ENCODE measurements at regions of chrX and their contacts with region 1.

Region 1: DNA sequence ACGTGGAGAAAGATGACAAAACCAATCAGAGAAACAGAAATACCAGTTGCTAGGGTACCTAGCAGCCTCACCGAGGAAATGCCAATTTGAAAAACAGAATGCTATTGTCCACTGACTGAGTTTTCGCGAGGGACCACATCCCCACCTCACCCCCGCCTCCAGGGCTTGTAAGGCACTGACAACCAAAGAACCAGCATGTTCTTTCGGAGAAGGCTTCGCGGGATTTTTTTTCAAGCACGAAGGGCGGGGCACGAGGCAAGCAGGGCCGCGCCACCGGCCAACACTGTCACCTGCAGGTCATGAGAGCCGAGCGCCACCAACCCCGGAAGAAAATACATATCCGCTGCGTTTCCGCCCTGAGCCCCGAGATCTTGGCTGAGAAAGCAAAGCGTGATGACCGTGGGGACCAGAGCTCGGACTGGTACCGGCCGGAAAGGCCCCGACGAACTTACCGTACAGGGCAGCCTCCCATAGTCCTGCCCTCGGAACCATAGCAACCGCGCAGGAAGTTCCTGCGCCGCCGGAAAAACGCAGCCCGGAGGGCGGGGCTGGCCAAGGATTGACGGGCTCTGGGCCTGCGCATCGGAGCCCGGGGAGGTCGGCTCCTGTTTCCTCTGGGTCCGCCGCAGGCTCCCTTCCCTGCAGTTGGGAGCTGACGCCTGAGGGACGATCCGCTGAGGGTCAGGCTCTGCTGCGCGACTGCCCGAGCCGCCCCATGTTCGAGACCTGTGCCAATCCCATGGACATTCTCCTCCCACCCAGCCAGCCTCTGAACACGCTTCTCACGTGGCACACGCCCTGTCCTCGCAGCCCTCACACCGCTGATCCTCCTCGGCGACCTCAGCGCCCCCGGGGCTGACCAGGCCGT is 59.2 kb upstream of the PAGE5 start:
- DNase-seq: peak; percentile 84 to 93 (median 90)
- ATAC-seq: peak; percentile 91
- H3K4me3 ChIP-seq: peak overlapping the region; percentile 77
- H3K4me3 Mint-ChIP-seq: peak overlapping the region; percentile 90
- H3K27ac ChIP-seq: peak overlapping the region; percentile 79 to 94
- H3K27ac Mint-ChIP-seq: peak overlapping the region; percentile 88
- H3K4me1 ChIP-seq: peaks cover 8% of the 10 kb centered on the region
- H3K4me1 Mint-ChIP-seq: peaks cover 17% of the 10 kb centered on the region
- H3K27me3 ChIP-seq: no peaks in the 10 kb centered on the region
- H3K27me3 Mint-ChIP-seq: no peaks in the 10 kb centered on the region
- CTCF ChIP-seq: peak; percentile 64

Region 2: GRCh38 chrX:54044126-54044876 is 1116.6 kb before region 1 on chrX and contains the start of gene PHF8:
- CTCF ChIA-PET with region 1: interaction called, 3 read pairs
- POLR2A ChIA-PET with region 1: no interaction called
- intact Hi-C with region 1: loop called in 1 of 2 experiments (anchors 2 kb)
- DNase-seq: peak; percentile 89 to 97 (median 94)
- ATAC-seq: peak; percentile 84
- H3K4me3 ChIP-seq: peak within 1 kb of the TSS; percentile 75
- H3K4me3 Mint-ChIP-seq: peak within 1 kb of the TSS; percentile 96
- H3K27ac ChIP-seq: peak within 1 kb of the TSS; percentile 89 to 90
- H3K27ac Mint-ChIP-seq: peak within 1 kb of the TSS; percentile 99
- H3K4me1 ChIP-seq: peaks cover 13% of the 10 kb centered on the region
- H3K4me1 Mint-ChIP-seq: peaks cover 29% of the 10 kb centered on the region
- H3K27me3 ChIP-seq: no peaks in the 10 kb centered on the region
- H3K27me3 Mint-ChIP-seq: no peaks in the 10 kb centered on the region
- CTCF ChIP-seq: no peak
- total RNA-seq, gene PHF8: 46.1 to 49.9 TPM

Region 3: DNA sequence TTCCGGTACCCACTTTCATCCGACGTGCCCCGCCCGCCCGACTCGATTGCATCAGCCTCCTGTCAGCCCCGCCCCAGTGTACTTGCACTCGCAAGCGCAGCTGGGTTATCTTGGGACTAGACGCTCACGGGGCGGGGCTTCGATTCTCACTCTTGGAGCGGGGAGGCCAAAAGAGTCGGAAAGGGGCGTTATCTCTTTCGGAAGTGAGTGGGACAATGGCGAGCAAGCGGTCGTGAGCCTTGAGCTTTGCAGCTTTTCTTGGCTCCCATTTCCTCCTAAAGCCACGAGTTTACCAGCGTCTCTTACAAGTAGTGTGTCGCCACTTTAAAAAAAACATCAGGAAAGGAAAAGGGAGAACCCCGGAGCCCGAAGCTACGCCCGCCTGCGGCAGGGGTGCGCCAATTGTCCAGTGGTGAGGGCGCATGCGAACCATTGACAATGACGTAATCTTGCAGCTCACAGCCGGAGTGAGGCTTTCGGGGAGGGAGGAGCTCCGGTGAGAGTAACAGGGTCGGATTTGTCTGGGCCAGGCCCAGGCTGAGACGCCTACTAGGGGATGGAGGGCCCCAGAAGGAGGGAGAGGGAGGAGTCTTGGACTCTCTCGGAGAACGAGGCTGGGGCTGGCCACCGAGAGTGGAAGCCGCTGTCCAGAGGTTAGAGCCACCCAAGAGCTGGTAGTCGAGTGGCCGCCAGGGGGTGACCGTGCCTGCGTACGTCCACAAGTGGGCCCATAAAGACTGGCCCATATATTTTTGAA is 521.4 kb before region 1 on chrX:
- CTCF ChIA-PET with region 1: no interaction called
- POLR2A ChIA-PET with region 1: interaction called, 7 read pairs
- intact Hi-C with region 1: loop called in 1 of 2 experiments (anchors 5 kb)
- DNase-seq: peak; percentile 82 to 96 (median 90)
- ATAC-seq: peak; percentile 88
- H3K4me3 ChIP-seq: peak overlapping the region; percentile 60
- H3K4me3 Mint-ChIP-seq: peak overlapping the region; percentile 94
- H3K27ac ChIP-seq: peak overlapping the region; percentile 93 to 95
- H3K27ac Mint-ChIP-seq: peak overlapping the region; percentile 98
- H3K4me1 ChIP-seq: peaks cover 14% of the 10 kb centered on the region
- H3K4me1 Mint-ChIP-seq: peaks cover 14% of the 10 kb centered on the region
- H3K27me3 ChIP-seq: no peaks in the 10 kb centered on the region
- H3K27me3 Mint-ChIP-seq: no peaks in the 10 kb centered on the region
- CTCF ChIP-seq: peak; percentile 47

Region 4: GRCh38 chrX:54999717-55000598 is 161.0 kb before region 1 on chrX and contains the start of gene APEX2:
- CTCF ChIA-PET with region 1: interaction called, 3 read pairs
- POLR2A ChIA-PET with region 1: interaction called, 3 read pairs
- intact Hi-C with region 1: loop called in 1 of 2 experiments (anchors 5 kb)
- DNase-seq: peak; percentile 72 to 95 (median 84)
- ATAC-seq: peak; percentile 94
- H3K4me3 ChIP-seq: peak within 1 kb of the TSS; percentile 89
- H3K4me3 Mint-ChIP-seq: peak within 1 kb of the TSS; percentile 96
- H3K27ac ChIP-seq: peak within 1 kb of the TSS; percentile 84 to 97
- H3K27ac Mint-ChIP-seq: peak within 1 kb of the TSS; percentile 97
- H3K4me1 ChIP-seq: peaks cover 20% of the 10 kb centered on the region
- H3K4me1 Mint-ChIP-seq: peaks cover 36% of the 10 kb centered on the region
- H3K27me3 ChIP-seq: no peaks in the 10 kb centered on the region
- H3K27me3 Mint-ChIP-seq: no peaks in the 10 kb centered on the region
- CTCF ChIP-seq: no peak
- total RNA-seq, gene APEX2: 6.4 to 7.2 TPM

Region 5: DNA sequence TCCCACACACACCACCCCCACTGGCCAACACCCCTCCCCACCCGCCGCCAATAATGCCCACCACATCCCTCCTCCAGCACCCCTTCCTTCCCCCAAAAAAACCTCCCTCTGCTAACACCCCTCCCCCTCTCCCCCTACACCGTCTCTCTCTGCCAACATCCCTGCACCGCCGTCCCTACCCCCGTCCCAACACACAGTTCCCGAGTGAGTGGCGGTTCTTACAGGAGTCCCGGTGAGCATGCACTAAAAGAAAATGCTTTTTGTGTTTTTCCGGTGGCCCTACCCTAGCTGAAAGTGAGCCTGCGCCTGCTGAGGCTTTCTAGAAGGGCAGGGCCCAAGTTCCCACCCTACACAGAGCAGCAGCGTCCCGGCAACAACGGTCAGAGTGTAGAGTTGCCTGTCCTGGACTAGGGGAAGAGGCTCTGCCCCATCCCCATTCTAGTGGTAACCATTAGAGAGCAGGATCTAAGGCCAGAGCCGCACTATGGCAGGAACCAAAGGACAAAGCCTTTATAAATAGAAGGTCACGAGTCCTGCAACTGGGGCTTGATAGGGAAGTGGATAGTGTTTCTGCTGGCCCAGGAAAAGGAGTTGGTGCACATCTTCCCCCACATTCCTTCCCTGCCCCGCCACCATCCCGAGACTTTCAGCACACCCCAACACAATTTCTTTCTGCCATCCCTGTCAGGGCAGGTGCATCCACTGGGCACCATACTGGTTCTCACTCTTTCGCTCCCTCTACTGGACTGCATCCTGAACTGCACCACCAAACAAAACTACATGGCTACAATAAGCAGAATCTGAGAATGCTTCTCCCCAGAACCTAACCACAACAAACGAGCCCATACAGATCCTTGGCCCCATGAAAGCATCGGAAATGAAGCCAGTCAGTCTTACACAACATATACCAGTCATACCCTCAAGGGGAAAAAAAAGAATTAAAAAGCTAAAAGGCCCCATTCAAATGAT is 181.9 kb after region 1 on chrX:
- CTCF ChIA-PET with region 1: no interaction called
- POLR2A ChIA-PET with region 1: no interaction called
- intact Hi-C with region 1: loop called in 1 of 2 experiments (anchors 10 kb)
- DNase-seq: peak in 12 of 14 experiments; percentile 6 to 70 (median 22)
- ATAC-seq: peak; percentile 93
- H3K4me3 ChIP-seq: no peak overlapping the region
- H3K4me3 Mint-ChIP-seq: peak overlapping the region; percentile 1
- H3K27ac ChIP-seq: no peak overlapping the region
- H3K27ac Mint-ChIP-seq: no peak overlapping the region
- H3K4me1 ChIP-seq: peaks cover 11% of the 10 kb centered on the region
- H3K4me1 Mint-ChIP-seq: peaks cover 16% of the 10 kb centered on the region
- H3K27me3 ChIP-seq: no peaks in the 10 kb centered on the region
- H3K27me3 Mint-ChIP-seq: no peaks in the 10 kb centered on the region
- CTCF ChIP-seq: peak; percentile 43